ENCODE measurements at regions of chr5 and their contacts with region 1.

Region 1: DNA sequence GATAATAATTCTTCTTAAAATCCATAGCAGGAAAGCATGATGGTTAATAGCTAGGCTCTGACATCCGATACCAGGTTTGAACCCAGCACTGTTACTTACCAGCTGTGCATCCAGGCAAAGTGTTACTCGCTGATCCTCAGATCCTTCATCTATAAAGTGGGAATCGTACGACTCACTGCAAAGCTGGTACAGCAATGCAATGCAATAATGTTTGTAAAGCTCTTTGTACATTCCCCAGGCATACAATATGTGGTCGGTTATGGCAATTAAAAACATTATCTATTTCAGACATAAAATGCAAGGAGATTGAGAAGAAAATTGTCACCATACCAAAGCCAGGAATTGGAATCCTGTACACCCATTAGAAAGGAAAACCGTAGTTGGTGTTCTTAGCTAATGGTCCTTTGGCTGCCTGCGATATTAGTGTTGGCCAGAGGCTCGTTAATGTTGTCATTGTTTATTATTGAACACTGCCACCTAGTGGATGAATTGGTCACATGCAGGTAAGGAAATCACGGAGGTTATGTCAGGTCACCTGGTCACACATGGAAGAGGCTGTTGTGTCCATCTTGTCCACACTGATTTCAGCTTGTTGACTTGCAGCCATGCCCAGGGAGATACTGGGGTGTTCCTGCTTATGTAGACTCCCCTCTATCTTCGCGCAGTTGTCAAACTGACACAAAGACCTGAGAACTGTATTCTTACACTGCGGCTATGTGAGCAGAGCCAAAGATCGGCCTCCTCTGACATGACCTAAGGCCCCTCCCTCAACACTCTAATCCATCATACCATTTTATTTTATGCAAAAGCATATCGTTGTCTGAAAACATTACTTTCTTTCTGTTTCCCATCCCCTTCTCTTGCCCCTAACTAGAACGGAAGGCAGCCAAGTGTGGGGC is 87.5 kb upstream of the PPP2R2B start:
- DNase-seq: peak in 31 of 35 experiments; percentile 2 to 81 (median 22)
- ATAC-seq: peak; percentile 59 to 77 (median 66)
- H3K4me3 ChIP-seq: no peak overlapping the region
- H3K4me3 Mint-ChIP-seq: no peak overlapping the region
- H3K27ac ChIP-seq: no peak overlapping the region
- H3K27ac Mint-ChIP-seq: no peak overlapping the region
- H3K4me1 ChIP-seq: no peaks in the 10 kb centered on the region
- H3K4me1 Mint-ChIP-seq: no peaks in the 10 kb centered on the region
- H3K27me3 ChIP-seq: no peaks in the 10 kb centered on the region
- H3K27me3 Mint-ChIP-seq: no peaks in the 10 kb centered on the region

Region 2: GRCh38 chr5:146533260-146533857 is 432.7 kb before region 1 on chr5:
- CTCF ChIA-PET with region 1: interaction called, 16 read pairs
- POLR2A ChIA-PET with region 1: no interaction called
- DNase-seq: peak; percentile 42 to 83 (median 66)
- ATAC-seq: peak; percentile 80 to 86 (median 86)
- H3K4me3 ChIP-seq: no peak overlapping the region
- H3K4me3 Mint-ChIP-seq: no peak overlapping the region
- H3K27ac ChIP-seq: no peak overlapping the region
- H3K27ac Mint-ChIP-seq: no peak overlapping the region
- H3K4me1 ChIP-seq: peaks cover 0 to 3% of the 10 kb centered on the region in 2 experiments
- H3K4me1 Mint-ChIP-seq: peaks cover 4 to 8% (median 4%) of the 10 kb centered on the region in 3 donors
- H3K27me3 ChIP-seq: no peaks in the 10 kb centered on the region
- H3K27me3 Mint-ChIP-seq: no peaks in the 10 kb centered on the region

Region 3: GRCh38 chr5:146541958-146542849 is 423.8 kb before region 1 on chr5:
- CTCF ChIA-PET with region 1: interaction called, 34 to 37 read pairs
- POLR2A ChIA-PET with region 1: no interaction called
- DNase-seq: peak; percentile 16 to 73 (median 58)
- ATAC-seq: peak; percentile 66 to 87 (median 75)
- H3K4me3 ChIP-seq: no peak overlapping the region
- H3K4me3 Mint-ChIP-seq: no peak overlapping the region
- H3K27ac ChIP-seq: no peak overlapping the region
- H3K27ac Mint-ChIP-seq: no peak overlapping the region
- H3K4me1 ChIP-seq: no peaks in the 10 kb centered on the region
- H3K4me1 Mint-ChIP-seq: peaks cover 0 to 6% (median 0%) of the 10 kb centered on the region in 3 donors
- H3K27me3 ChIP-seq: peaks cover 0 to 6% of the 10 kb centered on the region in 2 experiments
- H3K27me3 Mint-ChIP-seq: peaks cover 1 to 3% of the 10 kb centered on the region in 2 donors

Region 4: GRCh38 chr5:146662229-146662628 is 303.8 kb before region 1 on chr5:
- CTCF ChIA-PET with region 1: interaction called, 15 to 17 read pairs
- POLR2A ChIA-PET with region 1: no interaction called
- DNase-seq: peak in 7 of 35 experiments; percentile 4 to 68 (median 21)
- ATAC-seq: no peak
- H3K4me3 ChIP-seq: no peak overlapping the region
- H3K4me3 Mint-ChIP-seq: no peak overlapping the region
- H3K27ac ChIP-seq: no peak overlapping the region
- H3K27ac Mint-ChIP-seq: no peak overlapping the region
- H3K4me1 ChIP-seq: no peaks in the 10 kb centered on the region
- H3K4me1 Mint-ChIP-seq: peaks cover 0 to 10% (median 8%) of the 10 kb centered on the region in 3 donors
- H3K27me3 ChIP-seq: no peaks in the 10 kb centered on the region
- H3K27me3 Mint-ChIP-seq: no peaks in the 10 kb centered on the region

Region 5: DNA sequence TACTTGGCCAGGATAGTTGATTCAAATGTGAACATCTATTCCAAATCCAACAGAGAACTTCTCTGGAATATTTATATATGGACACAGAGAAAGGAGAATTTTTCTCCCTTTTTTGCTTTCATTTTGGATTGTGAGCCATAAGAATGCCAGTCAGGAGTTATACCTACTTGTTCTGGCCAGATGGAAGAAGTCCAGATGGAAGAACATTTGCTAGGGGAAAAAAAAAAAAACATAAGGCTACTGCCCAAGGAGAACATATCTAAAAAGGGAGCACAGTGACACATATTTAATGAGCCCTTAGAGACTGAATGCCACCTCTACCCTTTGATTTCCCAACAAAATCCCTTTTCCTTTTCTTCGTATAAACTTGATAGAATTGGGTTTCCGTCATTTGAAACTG is 25.7 kb before region 1 on chr5:
- CTCF ChIA-PET with region 1: interaction called in 1 of 2 experiments, 3 read pairs
- POLR2A ChIA-PET with region 1: interaction called in 1 of 2 experiments, 14 read pairs
- DNase-seq: no peak
- ATAC-seq: no peak
- H3K4me3 ChIP-seq: no peak overlapping the region
- H3K4me3 Mint-ChIP-seq: no peak overlapping the region
- H3K27ac ChIP-seq: no peak overlapping the region
- H3K27ac Mint-ChIP-seq: no peak overlapping the region
- H3K4me1 ChIP-seq: no peaks in the 10 kb centered on the region
- H3K4me1 Mint-ChIP-seq: no peaks in the 10 kb centered on the region
- H3K27me3 ChIP-seq: no peaks in the 10 kb centered on the region
- H3K27me3 Mint-ChIP-seq: peaks cover 2 to 5% of the 10 kb centered on the region in 2 donors

Region 6: DNA sequence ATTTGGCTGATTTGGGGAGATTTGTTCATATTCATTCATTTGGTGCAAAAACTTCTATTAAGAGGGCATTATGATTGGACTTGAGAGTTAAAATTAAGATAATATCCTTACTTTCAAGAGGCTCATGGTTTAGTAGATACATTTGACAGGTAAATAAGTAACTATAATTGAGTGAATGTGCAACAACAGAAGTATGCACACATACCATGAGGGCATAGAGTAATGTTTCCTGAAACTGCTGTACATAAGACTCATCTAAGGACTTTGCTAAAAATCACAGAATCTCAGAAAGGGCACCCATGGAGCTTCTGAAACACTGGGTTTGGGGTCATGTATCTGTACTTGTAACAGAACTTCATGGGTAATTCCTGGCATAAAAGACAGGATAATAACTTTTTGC is 17.3 kb before region 1 on chr5:
- CTCF ChIA-PET with region 1: interaction called, 4 to 11 read pairs
- POLR2A ChIA-PET with region 1: no interaction called
- DNase-seq: no peak
- ATAC-seq: no peak
- H3K4me3 ChIP-seq: no peak overlapping the region
- H3K4me3 Mint-ChIP-seq: no peak overlapping the region
- H3K27ac ChIP-seq: no peak overlapping the region
- H3K27ac Mint-ChIP-seq: no peak overlapping the region
- H3K4me1 ChIP-seq: peaks cover 0 to 4% of the 10 kb centered on the region in 2 experiments
- H3K4me1 Mint-ChIP-seq: peaks cover 0 to 5% (median 0%) of the 10 kb centered on the region in 3 donors
- H3K27me3 ChIP-seq: no peaks in the 10 kb centered on the region
- H3K27me3 Mint-ChIP-seq: peaks cover 5 to 13% of the 10 kb centered on the region in 2 donors

Region 7: GRCh38 chr5:147188200-147189108 is 222.4 kb after region 1 on chr5:
- CTCF ChIA-PET with region 1: interaction called, 7 to 18 read pairs
- POLR2A ChIA-PET with region 1: no interaction called
- DNase-seq: peak in 27 of 35 experiments; percentile 1 to 76 (median 21)
- ATAC-seq: peak; percentile 52 to 66 (median 60)
- H3K4me3 ChIP-seq: no peak overlapping the region
- H3K4me3 Mint-ChIP-seq: no peak overlapping the region
- H3K27ac ChIP-seq: no peak overlapping the region
- H3K27ac Mint-ChIP-seq: no peak overlapping the region
- H3K4me1 ChIP-seq: peaks cover 0 to 5% of the 10 kb centered on the region in 2 experiments
- H3K4me1 Mint-ChIP-seq: peaks cover 4 to 6% (median 6%) of the 10 kb centered on the region in 3 donors
- H3K27me3 ChIP-seq: peaks cover 0 to 3% of the 10 kb centered on the region in 2 experiments
- H3K27me3 Mint-ChIP-seq: peaks cover 3 to 6% of the 10 kb centered on the region in 2 donors